Activated CD4-positive, alpha-beta T cell treated with anti-CD3 and anti-CD28 coated beads, Interleukin-2, amount 10 ng/mL, durations not matched to agents 24 days and 14 days (primary cell): ENCODE measurements at regions of chr4 and their contacts with region 1.

Region 1: DNA sequence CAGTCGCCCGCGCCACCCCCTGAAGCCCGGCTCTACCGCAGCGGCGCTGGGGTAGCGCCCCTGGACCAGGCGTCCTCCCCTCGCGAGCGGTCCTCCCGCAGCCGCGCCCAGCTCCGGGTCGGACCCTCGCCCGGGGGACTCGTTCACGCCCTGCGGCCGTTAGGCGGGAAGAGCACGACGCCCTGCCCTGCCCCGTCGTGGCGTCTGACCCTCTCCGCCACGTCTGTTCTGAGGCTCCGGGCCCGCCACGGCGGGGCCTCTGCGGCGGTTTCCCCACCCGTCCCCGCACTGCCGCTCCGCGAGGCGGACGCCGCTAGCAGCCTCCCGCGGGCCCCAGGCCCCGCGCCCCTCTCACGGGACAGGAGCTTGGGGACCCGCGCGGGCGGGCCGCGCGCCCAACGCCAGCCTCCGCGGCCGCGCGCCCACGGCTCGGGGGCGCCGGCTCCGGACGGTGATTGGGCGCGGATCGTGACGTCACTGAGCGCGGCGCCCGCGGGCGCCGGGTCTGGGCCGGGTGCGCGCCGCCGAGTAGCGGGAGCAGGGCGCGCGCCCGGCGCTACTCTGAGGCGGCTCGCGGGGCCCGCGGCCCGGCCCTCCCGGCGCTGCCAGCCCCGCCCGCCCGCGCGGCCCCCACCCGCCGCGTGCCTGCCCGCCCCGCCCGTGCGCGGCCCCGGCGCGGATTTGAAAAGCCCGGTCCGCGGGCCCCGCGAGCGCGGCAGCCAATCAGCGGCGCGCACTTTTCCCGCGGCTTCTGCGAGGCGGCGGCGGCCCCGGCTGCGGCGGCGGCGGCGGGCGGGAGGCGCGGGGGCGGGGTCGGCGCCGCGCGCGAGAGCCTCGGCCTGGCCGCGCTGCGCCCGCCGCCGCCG is at the start of gene NSD2:
- DNase-seq: peak; percentile 97
- H3K4me3 Mint-ChIP-seq: peak within 1 kb of the TSS; percentile 94
- H3K27ac Mint-ChIP-seq: peak within 1 kb of the TSS; percentile 98
- H3K4me1 Mint-ChIP-seq: peaks cover 30% of the 10 kb centered on the region
- H3K27me3 Mint-ChIP-seq: no peaks in the 10 kb centered on the region
- total RNA-seq, gene NSD2: 208 and 214 TPM in 2 replicates

Region 2: GRCh38 chr4:1492651-1493537 is 377.9 kb before region 1 on chr4:
- intact Hi-C with region 1: no loop called
- DNase-seq: no peak
- H3K4me3 Mint-ChIP-seq: no peak overlapping the region
- H3K27ac Mint-ChIP-seq: no peak overlapping the region
- H3K4me1 Mint-ChIP-seq: no peaks in the 10 kb centered on the region
- H3K27me3 Mint-ChIP-seq: no peaks in the 10 kb centered on the region

Region 3: GRCh38 chr4:1712216-1713002 is 158.4 kb before region 1 on chr4 and contains the start of gene SLBP:
- intact Hi-C with region 1: loop called (anchors 2 kb)
- DNase-seq: peak; percentile 100
- H3K4me3 Mint-ChIP-seq: peak within 1 kb of the TSS; percentile 95
- H3K27ac Mint-ChIP-seq: peak within 1 kb of the TSS; percentile 98
- H3K4me1 Mint-ChIP-seq: peaks cover 49% of the 10 kb centered on the region
- H3K27me3 Mint-ChIP-seq: no peaks in the 10 kb centered on the region
- total RNA-seq, gene SLBP: 150 and 156 TPM in 2 replicates

Region 4: GRCh38 chr4:1856042-1856788 is 14.6 kb before region 1 on chr4 and contains the start of gene LETM1:
- intact Hi-C with region 1: loop called (anchors 1 kb)
- DNase-seq: peak; percentile 99
- H3K4me3 Mint-ChIP-seq: peak within 1 kb of the TSS; percentile 90
- H3K27ac Mint-ChIP-seq: peak within 1 kb of the TSS; percentile 82
- H3K4me1 Mint-ChIP-seq: peaks cover 25% of the 10 kb centered on the region
- H3K27me3 Mint-ChIP-seq: no peaks in the 10 kb centered on the region
- total RNA-seq, gene LETM1: 97.2 and 98.7 TPM in 2 replicates

Region 5: GRCh38 chr4:1887052-1887451 is 16.2 kb after region 1 on chr4:
- intact Hi-C with region 1: loop called (anchors 2 kb)
- DNase-seq: no peak
- H3K4me3 Mint-ChIP-seq: no peak overlapping the region
- H3K27ac Mint-ChIP-seq: peak overlapping the region; percentile 82
- H3K4me1 Mint-ChIP-seq: peaks cover 32% of the 10 kb centered on the region
- H3K27me3 Mint-ChIP-seq: no peaks in the 10 kb centered on the region

Region 6: DNA sequence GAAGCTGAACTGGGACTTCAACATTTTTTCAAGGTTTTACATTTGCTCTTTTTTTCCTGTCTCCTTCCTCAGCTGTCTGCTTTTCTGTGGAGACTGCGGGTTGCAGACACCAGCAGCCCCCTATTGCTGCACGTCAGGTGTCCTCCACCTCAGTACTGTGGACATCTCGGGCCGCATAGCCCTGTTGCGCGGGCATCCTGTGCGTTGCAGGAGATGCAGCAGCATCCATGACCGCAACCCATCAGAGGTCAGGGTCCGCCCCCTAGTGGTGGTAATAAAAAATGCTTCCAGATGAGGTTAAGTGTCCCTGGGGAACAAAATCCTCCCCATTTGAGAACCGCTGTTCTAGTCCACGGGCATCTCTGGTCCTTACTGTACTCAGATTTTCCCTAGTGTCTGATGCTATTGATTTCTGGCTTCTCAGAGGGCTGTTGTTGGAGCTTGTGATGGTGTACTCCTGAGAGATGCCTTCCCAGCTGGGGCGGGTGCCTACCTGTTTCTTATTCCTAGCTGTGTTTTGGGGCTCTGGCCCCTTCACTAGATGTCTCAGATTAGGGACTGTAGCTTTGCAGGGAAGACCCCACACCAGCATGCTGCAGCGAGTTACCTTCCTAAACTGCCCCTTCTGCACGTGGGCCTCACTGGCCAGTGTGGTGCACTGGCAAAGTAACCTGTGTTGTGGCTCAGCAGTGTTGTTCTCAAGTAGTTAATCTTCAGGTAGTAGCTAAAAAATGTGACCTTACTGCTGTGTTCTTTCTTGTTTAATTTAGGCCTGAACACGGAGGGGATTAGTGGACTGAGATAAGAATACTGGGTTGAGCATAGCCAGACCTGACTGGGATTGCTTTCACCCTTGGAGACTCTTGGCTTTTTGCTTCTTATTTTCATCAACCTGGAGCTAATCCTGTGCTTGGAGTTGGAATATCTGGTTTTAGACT is 28.6 kb after region 1 on chr4:
- intact Hi-C with region 1: loop called (anchors 1 kb)
- DNase-seq: peak; percentile 94
- H3K4me3 Mint-ChIP-seq: peak overlapping the region; percentile 28
- H3K27ac Mint-ChIP-seq: peak overlapping the region; percentile 86
- H3K4me1 Mint-ChIP-seq: peaks cover 59% of the 10 kb centered on the region
- H3K27me3 Mint-ChIP-seq: no peaks in the 10 kb centered on the region

Region 7: DNA sequence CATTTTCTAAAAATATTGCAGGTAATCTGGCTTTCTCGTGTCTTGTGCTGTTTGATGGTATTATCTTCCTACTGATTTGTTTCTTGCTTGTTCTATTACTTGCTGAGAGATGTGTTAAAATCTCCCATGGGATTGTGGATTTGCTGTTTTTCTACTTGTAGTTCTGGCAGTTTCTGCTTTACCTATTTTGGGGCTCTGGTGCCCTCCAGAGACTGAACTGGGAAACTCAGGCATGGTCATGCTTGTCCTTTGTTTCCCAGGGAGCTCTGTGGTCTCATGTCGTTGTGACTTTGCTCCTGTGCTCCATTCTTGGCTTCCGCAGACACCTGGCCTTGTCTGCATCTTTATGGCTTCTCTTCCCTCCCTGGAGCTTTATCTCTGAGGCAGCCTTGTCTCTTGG is 39.8 kb after region 1 on chr4:
- intact Hi-C with region 1: loop called (anchors 5 kb)
- DNase-seq: peak; percentile 82
- H3K4me3 Mint-ChIP-seq: no peak overlapping the region
- H3K27ac Mint-ChIP-seq: no peak overlapping the region
- H3K4me1 Mint-ChIP-seq: peaks cover 45% of the 10 kb centered on the region
- H3K27me3 Mint-ChIP-seq: no peaks in the 10 kb centered on the region

Region 8: DNA sequence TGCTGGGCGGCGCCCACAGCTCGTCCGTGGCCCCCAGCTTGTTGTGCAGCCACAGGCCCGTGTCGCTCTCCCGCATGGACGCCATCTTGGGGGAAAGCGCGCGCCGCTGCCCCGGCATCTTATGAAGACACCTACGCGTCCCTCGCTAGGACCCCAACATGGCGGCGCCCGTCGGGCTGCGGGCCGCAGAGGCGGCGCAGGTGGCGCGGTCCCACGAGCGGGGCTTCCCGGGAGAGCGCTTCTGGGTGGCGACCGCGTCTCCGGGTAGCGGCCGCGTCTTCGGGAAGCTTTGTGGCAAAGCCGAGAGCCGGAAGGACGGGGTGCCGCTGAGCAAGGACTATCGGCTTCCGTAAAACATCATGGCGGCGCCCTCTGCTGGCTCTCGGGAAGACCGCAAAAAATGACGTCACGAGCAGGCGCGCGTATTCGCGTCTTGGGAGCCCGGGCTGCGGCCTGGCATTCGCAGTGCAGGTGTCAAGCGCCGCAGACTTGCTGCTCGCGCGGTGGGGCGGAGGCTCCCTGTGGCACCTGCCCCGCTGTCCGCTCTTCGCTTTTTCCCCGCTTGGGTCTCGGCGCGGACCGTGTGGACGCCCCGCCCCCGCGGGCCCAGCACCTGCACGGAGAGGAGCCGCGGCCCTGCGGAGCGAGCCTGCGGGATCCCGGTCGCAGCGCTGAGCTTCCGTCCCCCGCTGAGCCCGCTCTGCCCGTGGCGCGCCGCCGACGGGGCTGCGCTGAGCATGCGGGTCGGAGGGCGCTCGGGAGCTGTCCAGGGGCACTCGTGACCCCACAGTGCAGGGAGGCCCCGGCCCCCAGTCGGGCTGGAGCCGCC is 138.3 kb after region 1 on chr4 and contains the start of gene NELFA:
- intact Hi-C with region 1: loop called (anchors 10 kb)
- DNase-seq: peak; percentile 98
- H3K4me3 Mint-ChIP-seq: peak within 1 kb of the TSS; percentile 91
- H3K27ac Mint-ChIP-seq: peak within 1 kb of the TSS; percentile 91
- H3K4me1 Mint-ChIP-seq: peaks cover 26% of the 10 kb centered on the region
- H3K27me3 Mint-ChIP-seq: peaks cover 10% of the 10 kb centered on the region
- total RNA-seq, gene NELFA: 51.1 and 57.4 TPM in 2 replicates